A673 (cell line): ENCODE measurements at regions of chr3 and their contacts with region 1.

Region 1: DNA sequence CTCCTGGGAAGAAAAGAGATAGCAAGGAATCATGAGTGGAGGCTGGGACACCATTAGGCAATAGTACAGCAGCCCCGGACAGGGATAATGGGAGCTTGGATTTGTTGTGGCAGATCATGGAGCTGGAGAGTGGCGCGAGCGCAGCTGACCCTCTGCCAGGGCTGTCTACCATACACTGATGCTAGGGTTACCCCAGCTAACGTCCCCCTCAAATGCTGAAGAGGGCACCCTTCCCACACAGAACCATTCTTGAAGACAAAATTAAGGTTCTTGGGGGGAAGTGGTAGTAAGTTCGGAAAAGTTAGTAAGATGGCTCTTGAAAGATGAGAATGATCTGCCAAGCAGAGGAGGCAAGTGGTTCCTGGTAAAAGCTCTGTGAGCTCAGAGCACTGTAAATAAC is 61.1 kb downstream of the ST3GAL6 start:
- DNase-seq: peak; percentile 67
- H3K4me3 ChIP-seq: no peak overlapping the region
- H3K27ac ChIP-seq: no peak overlapping the region
- H3K4me1 ChIP-seq: peaks cover 16% of the 10 kb centered on the region
- H3K27me3 ChIP-seq: no peaks in the 10 kb centered on the region
- CTCF ChIP-seq: peak; percentile 52

Region 2: DNA sequence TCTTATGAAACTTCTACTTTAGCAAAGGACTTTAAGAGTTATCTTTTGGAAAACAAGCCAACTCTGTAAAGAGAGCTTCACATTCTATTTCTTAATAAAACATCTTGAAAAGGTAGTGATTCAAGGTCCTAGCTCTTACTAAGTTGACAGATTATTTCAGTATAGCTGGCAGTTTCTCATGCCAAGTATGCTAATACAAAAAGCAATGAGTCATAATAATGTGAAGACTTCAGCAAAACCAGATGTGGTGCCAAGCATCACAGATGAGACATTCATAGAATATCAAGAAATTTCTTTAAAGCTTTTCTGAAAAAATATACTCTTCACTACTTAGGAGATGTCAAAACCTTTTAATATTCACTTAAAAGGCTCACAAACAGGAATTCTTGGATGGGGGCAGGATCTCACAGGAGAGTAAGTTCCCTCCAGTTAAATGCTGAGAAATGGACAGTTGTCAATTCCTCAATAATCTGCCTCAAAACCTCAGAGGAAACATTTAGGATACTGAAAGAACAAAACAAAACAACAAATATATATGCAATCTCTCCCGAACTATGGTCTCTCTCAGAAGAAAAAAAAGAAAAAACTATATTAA is 31.6 kb after region 1 on chr3:
- CTCF ChIA-PET with region 1: no interaction called
- POLR2A ChIA-PET with region 1: interaction called, 10 read pairs
- intact Hi-C with region 1: no loop called
- DNase-seq: peak; percentile 72
- H3K4me3 ChIP-seq: no peak overlapping the region
- H3K27ac ChIP-seq: peak overlapping the region; percentile 37
- H3K4me1 ChIP-seq: peaks cover 9% of the 10 kb centered on the region
- H3K27me3 ChIP-seq: no peaks in the 10 kb centered on the region
- CTCF ChIP-seq: no peak

Region 3: GRCh38 chr3:98901392-98902350 is 77.4 kb after region 1 on chr3 and contains the start of gene DCBLD2:
- CTCF ChIA-PET with region 1: no interaction called
- POLR2A ChIA-PET with region 1: no interaction called
- intact Hi-C with region 1: loop called (anchors 5 kb)
- DNase-seq: peak; percentile 100
- H3K4me3 ChIP-seq: peak within 1 kb of the TSS; percentile 72
- H3K27ac ChIP-seq: peak within 1 kb of the TSS; percentile 85
- H3K4me1 ChIP-seq: peaks cover 7% of the 10 kb centered on the region
- H3K27me3 ChIP-seq: no peaks in the 10 kb centered on the region
- CTCF ChIP-seq: no peak
- total RNA-seq, gene DCBLD2: 29.9 and 33.6 TPM in 2 replicates

Region 4: GRCh38 chr3:99789011-99789721 is 964.9 kb after region 1 on chr3:
- CTCF ChIA-PET with region 1: no interaction called
- POLR2A ChIA-PET with region 1: no interaction called
- intact Hi-C with region 1: loop called (anchors 10 kb)
- DNase-seq: peak; percentile 76
- H3K4me3 ChIP-seq: no peak overlapping the region
- H3K27ac ChIP-seq: no peak overlapping the region
- H3K4me1 ChIP-seq: no peaks in the 10 kb centered on the region
- H3K27me3 ChIP-seq: no peaks in the 10 kb centered on the region
- CTCF ChIP-seq: peak; percentile 78